Endothelial cell of umbilical vein (primary cell): ENCODE measurements at regions of chr14 and their contacts with region 1.

Region 1: GRCh38 chr14:53306267-53306721 is 153.2 kb upstream of the DDHD1 start:
- DNase-seq: peak; percentile 56
- H3K4me3 ChIP-seq: peak overlapping the region; percentile 27 to 91 (median 41)
- H3K27ac ChIP-seq: no peak overlapping the region
- H3K4me1 ChIP-seq: no peaks in the 10 kb centered on the region
- H3K27me3 ChIP-seq: peaks cover 0 to 13% of the 10 kb centered on the region in 2 experiments
- CTCF ChIP-seq: peak; percentile 58 to 69
- POLR2A ChIP-seq: no peak

Region 2: DNA sequence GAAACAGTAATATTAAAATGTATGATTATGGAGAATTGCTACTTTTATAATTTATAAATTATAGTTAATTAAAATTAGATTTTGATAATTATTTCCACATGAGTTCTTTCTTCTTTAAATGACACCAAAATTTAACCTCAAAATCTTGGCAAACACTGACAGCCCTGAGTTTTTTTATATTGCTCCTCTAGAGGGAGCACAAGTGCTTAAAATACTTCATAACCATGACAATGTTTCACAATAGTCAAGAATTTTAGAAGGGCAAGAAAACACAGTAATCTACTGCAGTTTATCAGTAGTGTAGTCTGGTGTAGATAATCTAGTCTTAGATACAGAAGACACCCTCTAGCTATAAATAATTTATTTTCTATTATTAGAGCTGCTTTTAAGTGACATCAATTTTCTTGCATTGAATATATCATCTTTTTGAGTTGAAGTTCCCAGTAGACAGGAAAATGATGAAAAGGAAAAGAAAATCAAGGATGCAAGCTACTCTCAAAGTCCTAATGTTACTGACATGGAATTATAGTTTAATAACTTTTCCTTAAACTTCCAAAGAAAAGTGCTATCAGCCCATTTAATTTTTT is 1006.5 kb before region 1 on chr14:
- CTCF ChIA-PET with region 1: interaction called, 3 read pairs
- POLR2A ChIA-PET with region 1: no interaction called
- dilution Hi-C with region 1: no loop called
- intact Hi-C with region 1: loop called (anchors 5 kb)
- DNase-seq: peak; percentile 47
- H3K4me3 ChIP-seq: no peak overlapping the region
- H3K27ac ChIP-seq: no peak overlapping the region
- H3K4me1 ChIP-seq: no peaks in the 10 kb centered on the region
- H3K27me3 ChIP-seq: peaks cover 8 to 17% of the 10 kb centered on the region in 2 experiments
- CTCF ChIP-seq: peak; percentile 33 to 35
- POLR2A ChIP-seq: no peak

Region 3: DNA sequence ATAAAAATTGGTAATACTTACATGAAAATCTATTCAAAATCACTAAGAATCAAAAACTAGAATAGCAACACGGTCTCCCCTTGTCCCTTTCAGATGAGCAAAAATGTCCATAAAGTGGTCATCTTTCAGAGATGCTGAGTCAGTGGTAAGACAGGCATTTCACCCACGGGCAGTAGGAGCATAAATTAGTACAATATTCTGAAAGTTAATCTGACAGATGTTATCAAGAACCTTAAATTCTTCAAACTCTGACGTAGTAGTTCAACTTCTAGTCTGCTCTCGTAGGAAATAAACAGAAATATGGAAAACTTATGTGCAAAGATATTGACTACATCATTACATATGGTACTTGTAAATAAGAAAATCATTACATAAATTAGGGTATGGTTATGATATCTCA is 481.8 kb before region 1 on chr14:
- CTCF ChIA-PET with region 1: interaction called, 38 read pairs
- POLR2A ChIA-PET with region 1: no interaction called
- dilution Hi-C with region 1: no loop called
- intact Hi-C with region 1: loop called (anchors 1 kb)
- DNase-seq: peak; percentile 17
- H3K4me3 ChIP-seq: no peak overlapping the region
- H3K27ac ChIP-seq: no peak overlapping the region
- H3K4me1 ChIP-seq: peaks cover 4% of the 10 kb centered on the region
- H3K27me3 ChIP-seq: no peaks in the 10 kb centered on the region
- CTCF ChIP-seq: no peak
- POLR2A ChIP-seq: no peak

Region 4: GRCh38 chr14:52862632-52863335 is 443.5 kb before region 1 on chr14:
- CTCF ChIA-PET with region 1: no interaction called
- POLR2A ChIA-PET with region 1: no interaction called
- dilution Hi-C with region 1: no loop called
- intact Hi-C with region 1: no loop called
- DNase-seq: peak; percentile 44
- H3K4me3 ChIP-seq: no peak overlapping the region
- H3K27ac ChIP-seq: no peak overlapping the region
- H3K4me1 ChIP-seq: peaks cover 2% of the 10 kb centered on the region
- H3K27me3 ChIP-seq: no peaks in the 10 kb centered on the region
- CTCF ChIP-seq: no peak
- POLR2A ChIP-seq: no peak

Region 5: DNA sequence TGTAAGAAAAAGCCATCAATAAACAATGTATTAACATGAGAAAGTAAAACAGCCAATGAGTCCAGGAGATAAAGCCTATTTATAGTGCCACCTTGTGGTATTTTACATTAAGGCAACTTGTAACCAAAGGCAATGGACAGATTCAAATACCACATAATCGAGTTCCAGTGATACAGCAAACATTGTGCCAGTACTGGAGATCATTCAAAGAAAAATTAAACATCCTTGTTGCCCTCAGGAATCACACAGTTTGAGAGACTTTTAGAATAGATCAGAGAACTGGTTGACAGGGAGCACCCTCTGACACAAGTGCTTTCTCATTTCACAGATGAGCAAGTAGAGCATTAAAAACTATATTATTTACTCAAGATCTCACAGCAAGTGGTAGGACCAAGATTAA is 251.3 kb before region 1 on chr14:
- CTCF ChIA-PET with region 1: interaction called, 13 read pairs
- POLR2A ChIA-PET with region 1: no interaction called
- dilution Hi-C with region 1: no loop called
- intact Hi-C with region 1: loop called (anchors 1 kb)
- DNase-seq: peak; percentile 70
- H3K4me3 ChIP-seq: no peak overlapping the region
- H3K27ac ChIP-seq: no peak overlapping the region
- H3K4me1 ChIP-seq: peaks cover 3% of the 10 kb centered on the region
- H3K27me3 ChIP-seq: no peaks in the 10 kb centered on the region
- CTCF ChIP-seq: peak; percentile 46 to 50
- POLR2A ChIP-seq: no peak

Region 6: GRCh38 chr14:53217295-53217994 is 88.8 kb before region 1 on chr14:
- CTCF ChIA-PET with region 1: interaction called, 12 read pairs
- POLR2A ChIA-PET with region 1: no interaction called
- dilution Hi-C with region 1: no loop called
- intact Hi-C with region 1: loop called (anchors 2 kb)
- DNase-seq: peak; percentile 79
- H3K4me3 ChIP-seq: peak overlapping the region in 2 of 3 experiments; percentile 22 to 69
- H3K27ac ChIP-seq: no peak overlapping the region
- H3K4me1 ChIP-seq: no peaks in the 10 kb centered on the region
- H3K27me3 ChIP-seq: no peaks in the 10 kb centered on the region
- CTCF ChIP-seq: peak; percentile 29 to 58
- POLR2A ChIP-seq: no peak

Region 7: DNA sequence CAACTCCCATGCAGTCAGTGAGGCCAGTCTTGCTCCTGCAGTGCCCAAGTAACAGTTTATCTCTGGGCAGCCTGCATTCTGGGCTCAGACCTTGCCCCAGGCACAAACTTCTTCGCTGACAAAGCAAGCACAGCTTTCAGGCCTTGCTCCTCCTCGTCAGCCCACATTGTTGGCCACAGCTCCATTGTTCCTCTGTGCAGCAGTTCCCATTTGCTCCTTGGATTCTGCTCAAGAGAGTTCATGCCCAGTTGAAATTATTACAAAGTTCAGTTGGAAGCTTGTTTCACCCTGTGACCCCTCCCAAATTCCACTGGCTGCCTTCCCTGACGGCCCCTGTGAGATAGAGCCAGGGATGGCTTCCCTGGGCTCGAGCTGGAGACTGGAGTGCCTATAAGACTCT is 10.2 kb after region 1 on chr14:
- CTCF ChIA-PET with region 1: interaction called, 17 read pairs
- POLR2A ChIA-PET with region 1: no interaction called
- dilution Hi-C with region 1: no loop called
- intact Hi-C with region 1: no loop called
- DNase-seq: no peak
- H3K4me3 ChIP-seq: no peak overlapping the region
- H3K27ac ChIP-seq: no peak overlapping the region
- H3K4me1 ChIP-seq: no peaks in the 10 kb centered on the region
- H3K27me3 ChIP-seq: no peaks in the 10 kb centered on the region
- CTCF ChIP-seq: no peak
- POLR2A ChIP-seq: no peak

Region 8: DNA sequence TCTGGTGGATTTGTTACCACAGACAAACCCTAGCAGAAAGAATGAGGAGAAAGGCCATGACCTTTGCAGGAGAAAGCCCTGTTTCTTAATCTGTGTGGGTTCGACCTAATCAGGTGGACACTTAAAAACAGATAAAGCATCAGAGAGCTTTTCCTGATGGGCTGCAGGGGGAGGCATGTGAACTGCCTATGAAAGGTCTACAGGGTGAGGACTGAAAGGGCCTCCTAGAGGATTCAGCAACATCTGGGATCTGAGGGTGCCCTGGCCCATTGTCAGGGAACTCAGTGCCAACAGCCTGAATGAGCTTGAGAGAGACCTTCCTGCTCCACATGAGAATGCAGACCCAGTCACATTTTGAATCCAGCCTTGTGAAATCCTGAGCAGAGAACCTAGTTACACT is 25.6 kb after region 1 on chr14:
- CTCF ChIA-PET with region 1: no interaction called
- POLR2A ChIA-PET with region 1: no interaction called
- dilution Hi-C with region 1: no loop called
- intact Hi-C with region 1: no loop called
- DNase-seq: no peak
- H3K4me3 ChIP-seq: no peak overlapping the region
- H3K27ac ChIP-seq: no peak overlapping the region
- H3K4me1 ChIP-seq: no peaks in the 10 kb centered on the region
- H3K27me3 ChIP-seq: peaks cover 0 to 5% of the 10 kb centered on the region in 2 experiments
- CTCF ChIP-seq: no peak
- POLR2A ChIP-seq: no peak

Region 9: DNA sequence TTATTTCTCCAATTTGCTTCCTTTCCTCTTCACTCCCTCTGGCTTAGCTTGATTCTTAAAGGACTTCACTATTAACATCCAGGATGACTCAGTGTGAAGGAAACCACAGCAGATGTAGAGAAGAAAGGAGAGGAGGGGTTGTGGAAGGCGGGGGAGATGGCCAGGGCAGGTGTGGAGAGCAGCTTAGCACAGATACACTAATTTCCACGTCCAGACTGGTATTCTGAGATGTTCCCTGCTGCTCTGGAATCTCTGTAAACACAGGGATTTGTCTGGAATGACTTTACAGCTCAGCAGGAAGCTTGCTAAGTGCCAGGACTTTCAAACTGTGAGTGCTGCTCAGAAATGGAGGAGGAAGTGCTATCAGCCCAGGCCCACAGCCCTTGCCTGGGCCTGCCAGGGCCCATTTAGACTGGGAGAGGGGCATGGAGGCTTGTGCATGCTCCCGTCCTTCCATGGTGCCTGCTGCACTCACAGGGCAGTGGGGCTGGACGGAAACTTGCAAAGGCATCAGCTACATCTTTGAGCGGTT is 49.4 kb after region 1 on chr14:
- CTCF ChIA-PET with region 1: interaction called, 10 read pairs
- POLR2A ChIA-PET with region 1: no interaction called
- dilution Hi-C with region 1: no loop called
- intact Hi-C with region 1: no loop called
- DNase-seq: peak; percentile 52
- H3K4me3 ChIP-seq: no peak overlapping the region
- H3K27ac ChIP-seq: no peak overlapping the region
- H3K4me1 ChIP-seq: peaks cover 8% of the 10 kb centered on the region
- H3K27me3 ChIP-seq: no peaks in the 10 kb centered on the region
- CTCF ChIP-seq: no peak
- POLR2A ChIP-seq: no peak

Region 10: DNA sequence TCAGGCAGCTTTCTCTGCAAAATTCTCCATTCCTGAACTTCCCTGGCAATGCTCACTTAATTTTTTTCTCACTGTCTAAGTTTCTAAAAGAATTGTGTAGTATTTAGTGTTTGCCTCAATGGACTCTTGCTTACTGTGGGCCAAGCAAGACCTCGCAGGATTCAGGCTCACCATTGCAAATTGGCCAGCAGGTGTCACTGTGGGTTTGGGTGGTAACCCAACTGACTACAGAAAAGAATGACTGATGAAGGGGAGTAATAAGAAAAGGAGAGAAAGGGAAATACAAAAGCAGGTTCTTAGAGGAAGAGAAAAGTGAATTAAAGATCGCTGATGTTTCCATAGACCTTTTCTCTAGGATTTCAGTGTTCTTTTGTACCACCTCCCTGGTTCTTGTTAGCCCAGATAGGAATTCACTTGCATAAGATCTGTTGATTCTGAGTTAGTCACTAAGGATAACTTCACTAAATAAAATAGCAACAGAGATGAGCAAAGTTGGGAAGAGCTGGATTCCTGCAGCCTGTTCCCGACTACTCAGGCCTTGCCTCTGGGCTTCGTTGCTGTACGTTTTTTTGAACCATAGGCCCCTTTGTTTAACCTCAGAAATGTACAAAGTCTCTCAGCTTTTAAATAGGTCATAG is 233.3 kb after region 1 on chr14:
- CTCF ChIA-PET with region 1: no interaction called
- POLR2A ChIA-PET with region 1: no interaction called
- dilution Hi-C with region 1: no loop called
- intact Hi-C with region 1: no loop called
- DNase-seq: peak; percentile 94
- H3K4me3 ChIP-seq: no peak overlapping the region
- H3K27ac ChIP-seq: no peak overlapping the region
- H3K4me1 ChIP-seq: peaks cover 43% of the 10 kb centered on the region
- H3K27me3 ChIP-seq: no peaks in the 10 kb centered on the region
- CTCF ChIP-seq: peak; percentile 74 to 82
- POLR2A ChIP-seq: no peak